GM13976 (cell line): ENCODE measurements at regions of chr6 and their contacts with region 1.

Region 1: GRCh38 chr6:148166339-148166968 is 176.2 kb upstream of the SASH1 start:
- DNase-seq: peak; percentile 30
- CTCF ChIP-seq: peak; percentile 21

Region 2: GRCh38 chr6:147506704-147507114 is 659.7 kb before region 1 on chr6:
- in situ Hi-C with region 1: loop called (anchors 25 kb)
- DNase-seq: peak; percentile 75
- CTCF ChIP-seq: peak; percentile 48

Region 3: DNA sequence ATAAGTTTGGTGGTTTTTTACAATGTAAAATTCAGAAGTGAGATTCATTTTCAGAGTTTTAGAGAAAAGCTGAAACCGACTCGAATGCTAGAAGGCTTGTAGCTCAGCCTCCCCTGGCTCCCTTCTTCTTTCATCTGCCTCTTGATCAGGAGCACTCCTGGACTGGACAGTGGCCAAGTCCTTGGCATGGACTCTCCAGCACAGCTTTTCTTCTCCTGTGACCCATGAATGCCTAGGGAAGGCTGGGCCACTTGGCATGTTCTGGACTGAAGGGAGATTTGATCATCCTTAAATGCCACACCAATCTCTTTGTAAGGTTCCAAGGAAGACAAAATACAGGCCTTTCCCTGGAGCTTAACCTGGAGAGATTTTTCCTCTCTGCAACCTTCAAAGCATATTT is 207.8 kb before region 1 on chr6:
- in situ Hi-C with region 1: no loop called
- DNase-seq: no peak
- CTCF ChIP-seq: no peak

Region 4: GRCh38 chr6:148293181-148293995 is 126.9 kb after region 1 on chr6:
- in situ Hi-C with region 1: no loop called
- DNase-seq: no peak
- CTCF ChIP-seq: no peak